ENCODE measurements at regions of chr2 and their contacts with region 1.

Region 1: GRCh38 chr2:105809097-105809473 is 64.4 kb downstream of the NCK2 start:
- DNase-seq: peak; percentile 75
- H3K4me3 Mint-ChIP-seq: no peak overlapping the region
- H3K27ac Mint-ChIP-seq: peak overlapping the region; percentile 92
- H3K4me1 Mint-ChIP-seq: peaks cover 93% of the 10 kb centered on the region
- H3K27me3 Mint-ChIP-seq: no peaks in the 10 kb centered on the region

Region 2: DNA sequence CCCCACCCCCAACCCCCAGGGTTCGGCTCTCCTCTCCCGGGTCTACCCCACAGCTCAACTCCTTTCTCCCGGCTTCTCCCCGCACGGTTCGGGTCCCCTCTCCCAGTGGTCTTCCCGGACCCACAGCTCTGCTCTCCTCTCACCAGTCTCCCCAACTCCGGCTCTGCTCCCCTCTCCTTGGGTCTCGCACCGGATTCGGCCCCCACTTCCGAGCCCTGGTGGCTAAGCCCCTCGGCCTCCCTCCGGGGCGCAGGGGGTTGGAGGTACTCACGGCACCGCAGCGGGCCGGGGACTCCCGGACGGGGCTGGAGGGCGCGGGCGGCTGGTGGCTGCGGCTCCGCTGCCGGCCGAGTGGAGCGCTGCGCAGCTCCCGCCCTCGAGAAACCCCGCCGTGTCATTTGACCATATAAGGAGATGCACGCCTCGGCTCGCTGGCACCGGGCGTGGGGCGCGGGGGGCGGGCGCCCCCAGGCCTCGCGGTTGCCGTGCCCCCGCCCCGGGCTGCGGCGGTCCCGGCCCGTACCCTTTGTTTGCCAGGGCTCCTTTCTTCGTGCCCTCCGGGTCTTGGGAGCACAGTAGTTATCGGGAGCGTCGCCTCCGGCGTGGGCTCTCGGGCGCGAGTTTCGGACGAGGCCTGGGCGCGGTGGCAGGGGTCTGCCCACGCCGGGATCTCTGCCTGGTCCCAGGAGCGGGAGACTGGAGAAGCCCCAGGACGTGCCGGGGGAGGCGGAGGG is 410.2 kb before region 1 on chr2 and contains the start of gene FHL2:
- CTCF ChIA-PET with region 1: no interaction called
- POLR2A ChIA-PET with region 1: no interaction called
- intact Hi-C with region 1: no loop called
- DNase-seq: peak; percentile 77
- H3K4me3 Mint-ChIP-seq: peak within 1 kb of the TSS; percentile 70
- H3K27ac Mint-ChIP-seq: no peak within 1 kb of the TSS
- H3K4me1 Mint-ChIP-seq: peaks cover 7% of the 10 kb centered on the region
- H3K27me3 Mint-ChIP-seq: peaks cover 24% of the 10 kb centered on the region
- total RNA-seq, gene FHL2: 1.3 to 1.5 TPM

Region 3: DNA sequence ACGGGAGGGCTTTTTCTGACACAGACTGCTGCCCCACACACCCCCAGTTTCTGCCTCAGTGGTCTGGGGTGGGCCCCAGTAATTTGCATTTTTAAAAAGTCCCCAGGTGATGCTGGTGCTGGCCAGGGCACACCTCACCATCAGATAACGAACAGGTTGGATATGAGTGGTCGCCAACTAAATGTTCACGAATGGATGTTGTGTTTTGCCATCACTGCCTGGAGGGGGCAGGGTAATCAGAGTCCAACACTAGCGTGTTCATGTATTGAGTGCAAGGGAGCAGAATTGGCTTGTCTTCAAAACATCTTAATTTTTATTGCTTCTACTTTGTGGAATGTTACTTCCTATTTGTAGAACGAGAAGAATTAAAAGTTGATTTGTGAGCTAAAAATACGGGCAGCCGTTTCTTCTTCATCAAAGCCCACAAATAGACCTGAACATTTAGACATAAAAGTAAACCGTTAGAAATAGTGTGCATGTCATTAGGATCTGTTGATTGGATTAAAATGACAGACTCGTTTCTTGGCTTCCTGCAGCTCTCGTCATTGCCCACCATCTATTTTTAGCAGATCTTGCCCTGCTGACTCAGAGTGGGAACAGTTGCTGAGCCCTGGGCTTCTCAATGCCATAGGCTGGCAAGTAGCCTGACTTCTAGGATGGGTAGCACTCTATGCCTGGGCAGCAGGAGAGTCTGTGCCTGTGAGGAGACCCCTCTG is 19.2 kb before region 1 on chr2:
- CTCF ChIA-PET with region 1: interaction called, 5 read pairs
- POLR2A ChIA-PET with region 1: no interaction called
- intact Hi-C with region 1: loop called (anchors 1 kb)
- DNase-seq: peak; percentile 87
- H3K4me3 Mint-ChIP-seq: peak overlapping the region; percentile 59
- H3K27ac Mint-ChIP-seq: peak overlapping the region; percentile 96
- H3K4me1 Mint-ChIP-seq: peaks cover 95% of the 10 kb centered on the region
- H3K27me3 Mint-ChIP-seq: no peaks in the 10 kb centered on the region

Region 4: DNA sequence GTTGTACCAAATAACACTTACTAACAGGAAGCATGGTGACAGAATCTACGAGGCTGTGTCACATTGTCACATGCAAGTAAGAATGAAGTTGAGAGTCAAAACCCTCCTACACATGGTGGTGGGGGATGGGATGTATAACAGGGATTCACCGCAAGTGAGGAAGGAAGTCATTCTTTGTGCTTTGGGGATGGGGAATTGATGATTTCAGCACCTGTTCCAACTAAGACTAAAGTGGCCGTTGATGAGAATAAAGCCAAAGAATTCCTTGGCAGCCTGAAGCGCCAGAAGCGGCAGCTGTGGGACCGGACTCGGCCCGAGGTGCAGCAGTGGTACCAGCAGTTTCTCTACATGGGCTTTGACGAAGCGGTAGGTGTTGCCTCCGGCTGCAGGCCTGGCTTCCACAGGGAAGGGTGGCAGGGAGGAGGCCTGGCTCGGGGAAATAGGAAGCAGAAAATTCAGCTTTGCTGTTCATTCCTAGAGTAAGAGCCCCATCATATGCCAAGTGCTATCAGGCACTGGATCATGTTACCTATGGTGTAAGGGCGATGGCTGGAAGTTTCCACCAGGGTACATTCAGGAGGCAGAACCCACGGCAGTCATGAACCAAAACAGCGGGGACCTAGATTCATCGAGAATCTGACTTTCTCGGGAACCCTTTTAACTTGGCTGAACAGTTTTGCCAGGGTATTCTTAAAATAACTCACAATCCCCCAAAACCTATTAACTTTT is 264.8 kb after region 1 on chr2:
- CTCF ChIA-PET with region 1: no interaction called
- POLR2A ChIA-PET with region 1: no interaction called
- intact Hi-C with region 1: no loop called
- DNase-seq: no peak
- H3K4me3 Mint-ChIP-seq: no peak overlapping the region
- H3K27ac Mint-ChIP-seq: no peak overlapping the region
- H3K4me1 Mint-ChIP-seq: peaks cover 9% of the 10 kb centered on the region
- H3K27me3 Mint-ChIP-seq: peaks cover 2% of the 10 kb centered on the region

Measured in activated CD4-positive, alpha-beta memory T cell treated with anti-CD3 and anti-CD28 coated beads for 36 hours (primary cell).